GM12878 (cell line): ENCODE measurements at regions of chr2 and their contacts with region 1.

Region 1: GRCh38 chr2:74833418-74834233 is at the start of gene HK2:
- DNase-seq: peak; percentile 70
- ATAC-seq: peak; percentile 88
- H3K4me3 ChIP-seq: peak within 1 kb of the TSS; percentile 76
- H3K27ac ChIP-seq: peak within 1 kb of the TSS; percentile 73
- H3K4me1 ChIP-seq: peaks cover 11% of the 10 kb centered on the region
- H3K27me3 ChIP-seq: no peaks in the 10 kb centered on the region
- CTCF ChIP-seq: no peak
- EP300 ChIP-seq: no peak
- POLR2A ChIP-seq: peak; percentile 73
- RAD21 ChIP-seq: no peak
- polyA plus RNA-seq, gene HK2: 5.0 to 6.4 TPM

Region 2: GRCh38 chr2:74849228-74849892 is 15.7 kb after region 1 on chr2:
- CTCF ChIA-PET with region 1: interaction called, 87 read pairs
- POLR2A ChIA-PET with region 1: interaction called, 9 read pairs
- RAD21 ChIA-PET with region 1: interaction called, 49 read pairs
- SMC1A ChIA-PET with region 1: interaction called, 68 read pairs
- in situ Hi-C with region 1: no loop called
- intact Hi-C with region 1: loop called (anchors 2 kb)
- DNase-seq: peak; percentile 62
- ATAC-seq: peak; percentile 88
- H3K4me3 ChIP-seq: peak overlapping the region; percentile 59; the same call in 1 of the 2 replicates
- H3K27ac ChIP-seq: peak overlapping the region; percentile 80
- H3K4me1 ChIP-seq: peaks cover 55% of the 10 kb centered on the region
- H3K27me3 ChIP-seq: no peaks in the 10 kb centered on the region
- CTCF ChIP-seq: no peak
- EP300 ChIP-seq: no peak
- POLR2A ChIP-seq: peak; percentile 51; the same call in 1 of the 2 replicates
- RAD21 ChIP-seq: no peak

Region 3: GRCh38 chr2:74856004-74856578 is 22.5 kb after region 1 on chr2:
- CTCF ChIA-PET with region 1: interaction called, 87 read pairs
- POLR2A ChIA-PET with region 1: no interaction called
- RAD21 ChIA-PET with region 1: interaction called, 49 read pairs
- SMC1A ChIA-PET with region 1: interaction called, 68 read pairs
- in situ Hi-C with region 1: no loop called
- intact Hi-C with region 1: no loop called
- DNase-seq: no peak
- ATAC-seq: no peak
- H3K4me3 ChIP-seq: no peak overlapping the region
- H3K27ac ChIP-seq: no peak overlapping the region
- H3K4me1 ChIP-seq: peaks cover 4% of the 10 kb centered on the region; the same call in 1 of the 2 replicates
- H3K27me3 ChIP-seq: no peaks in the 10 kb centered on the region
- CTCF ChIP-seq: no peak
- EP300 ChIP-seq: no peak
- POLR2A ChIP-seq: no peak
- RAD21 ChIP-seq: no peak

Region 4: DNA sequence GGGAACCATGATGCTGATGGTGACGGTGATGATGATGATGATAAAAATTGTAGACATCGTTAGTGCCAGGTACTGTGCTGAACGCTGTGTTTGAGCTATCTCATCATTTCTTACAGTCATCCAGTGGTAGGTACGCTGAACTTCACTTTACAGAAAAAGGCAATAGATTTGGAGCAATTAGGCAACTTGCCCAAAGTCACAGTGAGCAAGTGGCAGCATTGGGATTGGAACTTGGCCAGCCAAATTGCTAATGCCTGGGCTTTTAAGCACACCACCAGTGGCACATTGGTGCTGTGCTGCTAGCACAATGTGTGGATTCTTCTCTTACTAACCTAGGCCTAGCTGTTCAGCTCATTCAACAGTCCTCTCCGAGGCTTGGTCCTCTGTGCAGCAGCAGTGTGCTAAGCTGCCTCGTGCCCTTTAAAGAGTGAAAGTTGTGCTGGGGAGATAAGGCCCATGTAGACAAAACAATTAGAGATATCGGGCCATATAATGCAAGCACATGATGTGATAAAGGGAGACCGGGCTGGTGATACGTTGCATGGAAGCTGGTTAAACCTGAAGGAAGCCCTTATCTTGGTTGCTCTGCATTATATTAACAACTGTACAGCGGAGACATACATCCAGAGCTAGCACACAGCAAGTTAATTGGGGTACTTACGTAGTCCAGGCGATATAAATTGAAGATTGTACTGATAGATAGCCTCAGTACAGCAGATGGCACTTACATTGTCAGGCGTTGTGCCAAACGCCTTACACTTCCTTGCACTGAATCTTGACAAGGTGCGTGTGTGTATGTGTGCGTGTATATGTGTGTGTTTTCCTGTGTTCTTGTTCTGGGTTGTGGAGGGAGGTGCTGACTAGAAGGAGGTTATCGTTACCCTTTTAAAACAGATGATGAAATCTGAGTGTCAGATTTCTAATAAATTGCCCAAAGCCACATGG is 28.7 kb after region 1 on chr2:
- CTCF ChIA-PET with region 1: interaction called, 13 read pairs
- POLR2A ChIA-PET with region 1: interaction called, 3 read pairs
- RAD21 ChIA-PET with region 1: interaction called, 12 read pairs
- SMC1A ChIA-PET with region 1: interaction called, 12 read pairs
- in situ Hi-C with region 1: no loop called
- intact Hi-C with region 1: no loop called
- DNase-seq: no peak
- ATAC-seq: no peak
- H3K4me3 ChIP-seq: no peak overlapping the region
- H3K27ac ChIP-seq: no peak overlapping the region
- H3K4me1 ChIP-seq: peaks cover 15% of the 10 kb centered on the region
- H3K27me3 ChIP-seq: no peaks in the 10 kb centered on the region
- CTCF ChIP-seq: no peak
- EP300 ChIP-seq: no peak
- POLR2A ChIP-seq: no peak
- RAD21 ChIP-seq: no peak

Region 5: DNA sequence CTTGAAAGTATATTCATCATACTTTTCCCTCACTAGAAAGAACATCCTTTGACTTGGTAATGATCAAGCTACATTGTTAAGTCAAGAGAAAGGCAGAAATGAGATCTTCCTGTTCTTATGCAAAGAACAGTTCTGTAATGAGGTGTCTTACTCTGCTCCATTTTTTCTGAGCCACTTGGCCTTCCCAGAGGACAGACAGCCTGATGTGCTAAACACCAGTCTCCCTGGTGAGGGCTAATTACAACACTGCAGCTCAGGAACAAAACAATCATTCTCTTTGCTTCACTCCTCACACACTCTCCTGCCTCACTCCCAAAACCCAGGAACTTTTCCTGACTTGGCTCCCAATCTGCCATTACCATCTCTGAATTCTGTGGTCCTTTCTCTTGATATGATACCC is 340.1 kb after region 1 on chr2:
- CTCF ChIA-PET with region 1: no interaction called
- POLR2A ChIA-PET with region 1: no interaction called
- RAD21 ChIA-PET with region 1: no interaction called
- SMC1A ChIA-PET with region 1: no interaction called
- in situ Hi-C with region 1: no loop called
- intact Hi-C with region 1: no loop called
- DNase-seq: no peak
- ATAC-seq: no peak
- H3K4me3 ChIP-seq: no peak overlapping the region
- H3K27ac ChIP-seq: no peak overlapping the region
- H3K4me1 ChIP-seq: no peaks in the 10 kb centered on the region
- H3K27me3 ChIP-seq: no peaks in the 10 kb centered on the region
- CTCF ChIP-seq: no peak
- EP300 ChIP-seq: no peak
- POLR2A ChIP-seq: no peak
- RAD21 ChIP-seq: no peak